Sigmoid colon (tissue), 7 donors: ENCODE measurements at regions of chr2 and their contacts with region 1.

Region 1: DNA sequence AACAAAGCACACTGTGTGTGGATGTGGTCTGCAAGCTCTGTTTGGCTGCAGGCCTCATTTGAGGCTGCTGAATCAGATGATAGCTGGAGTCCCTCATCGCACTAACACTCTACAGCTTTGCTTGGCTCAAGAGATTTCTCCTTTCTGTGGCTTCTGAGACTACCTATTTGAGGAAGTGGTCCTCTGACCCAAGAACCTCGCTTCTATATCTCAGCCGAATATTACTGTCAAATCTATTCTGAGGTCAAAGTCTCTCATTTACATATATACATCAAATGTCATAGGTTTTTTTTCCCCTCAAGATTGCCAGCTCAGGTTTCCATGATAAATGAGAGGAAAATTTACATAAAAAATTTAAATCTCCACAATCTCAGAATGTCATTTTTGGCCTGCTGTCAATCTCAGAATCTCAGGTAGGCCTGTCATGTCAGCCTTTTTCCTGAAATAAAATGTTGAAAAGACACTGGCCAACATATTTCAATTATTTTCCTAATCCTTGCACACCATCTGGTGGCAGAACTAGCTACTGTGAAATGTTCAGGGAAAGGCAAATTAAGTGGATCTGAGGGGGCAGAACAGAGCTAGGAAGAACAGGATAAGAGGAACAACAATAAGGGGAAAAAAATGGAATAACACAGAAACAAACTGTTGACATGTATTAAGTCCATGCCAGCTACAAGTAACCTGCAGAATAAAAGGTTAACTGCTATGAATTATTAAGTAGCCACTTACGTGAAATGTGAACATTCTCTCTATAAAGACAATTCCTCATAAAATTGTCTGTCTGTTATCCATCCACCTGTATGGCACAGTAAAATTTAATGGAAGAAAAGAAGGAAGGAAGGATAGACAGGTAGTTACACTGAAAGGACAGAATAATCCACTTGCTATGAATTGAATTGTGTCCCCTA is 39.3 kb downstream of the AP1S3 start:
- DNase-seq: no peak
- H3K4me3 ChIP-seq: no peak overlapping the region
- H3K27ac ChIP-seq: no peak overlapping the region
- H3K4me1 ChIP-seq: no peaks in the 10 kb centered on the region
- H3K27me3 ChIP-seq: no peaks in the 10 kb centered on the region
- CTCF ChIP-seq: peak; percentile 57 to 71 (median 61)
- EP300 ChIP-seq: no peak
- POLR2A ChIP-seq: no peak

Region 2: DNA sequence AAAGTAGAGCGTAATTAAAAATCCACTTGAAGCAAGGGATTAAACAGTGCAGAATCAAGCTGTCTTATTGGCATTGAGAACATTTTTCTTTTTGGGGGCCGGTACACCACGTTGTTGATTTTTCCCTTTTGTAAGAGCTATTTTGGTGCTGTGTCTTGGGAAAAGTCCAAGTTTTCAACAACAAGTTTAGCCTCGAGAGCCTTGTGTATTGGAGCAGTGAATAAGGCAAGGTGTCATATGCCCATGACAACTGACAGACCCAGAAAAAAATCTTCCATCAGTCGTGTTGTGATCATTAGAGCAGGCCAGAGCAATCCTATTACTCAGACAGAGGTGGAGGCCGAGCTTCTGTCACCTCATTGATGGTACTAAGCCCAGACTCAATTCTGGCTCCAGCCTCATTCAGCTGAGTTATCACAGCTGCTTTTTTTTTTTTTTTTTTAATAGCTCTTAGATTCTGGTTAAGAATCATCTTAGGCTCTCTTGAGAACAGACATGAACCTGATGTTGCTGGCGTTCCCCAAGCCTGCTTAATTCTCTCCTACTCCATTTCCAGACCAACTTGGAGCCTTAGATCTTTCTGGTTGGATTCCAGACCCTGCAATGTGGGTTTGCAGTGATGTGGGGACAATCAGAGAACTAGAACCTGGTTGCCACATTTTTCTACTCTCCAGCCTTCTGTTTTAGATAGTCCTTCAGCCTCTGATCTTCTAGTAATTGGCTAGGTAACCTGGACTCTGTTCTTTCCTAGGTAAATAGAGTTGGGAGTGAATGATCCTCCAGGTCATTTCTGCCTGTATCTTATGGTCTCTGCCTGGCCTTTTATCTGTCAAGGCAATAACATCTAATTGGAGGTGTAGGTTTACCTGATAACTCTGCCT is 1083.5 kb before region 1 on chr2:
- intact Hi-C with region 1: loop called (anchors 10 kb)
- DNase-seq: peak; percentile 77
- H3K4me3 ChIP-seq: no peak overlapping the region
- H3K27ac ChIP-seq: peak overlapping the region; percentile 34 to 64 (median 50)
- H3K4me1 ChIP-seq: peaks cover 0 to 17% (median 14%) of the 10 kb centered on the region in 4 donors
- H3K27me3 ChIP-seq: no peaks in the 10 kb centered on the region
- CTCF ChIP-seq: no peak
- EP300 ChIP-seq: no peak
- POLR2A ChIP-seq: no peak

Region 3: DNA sequence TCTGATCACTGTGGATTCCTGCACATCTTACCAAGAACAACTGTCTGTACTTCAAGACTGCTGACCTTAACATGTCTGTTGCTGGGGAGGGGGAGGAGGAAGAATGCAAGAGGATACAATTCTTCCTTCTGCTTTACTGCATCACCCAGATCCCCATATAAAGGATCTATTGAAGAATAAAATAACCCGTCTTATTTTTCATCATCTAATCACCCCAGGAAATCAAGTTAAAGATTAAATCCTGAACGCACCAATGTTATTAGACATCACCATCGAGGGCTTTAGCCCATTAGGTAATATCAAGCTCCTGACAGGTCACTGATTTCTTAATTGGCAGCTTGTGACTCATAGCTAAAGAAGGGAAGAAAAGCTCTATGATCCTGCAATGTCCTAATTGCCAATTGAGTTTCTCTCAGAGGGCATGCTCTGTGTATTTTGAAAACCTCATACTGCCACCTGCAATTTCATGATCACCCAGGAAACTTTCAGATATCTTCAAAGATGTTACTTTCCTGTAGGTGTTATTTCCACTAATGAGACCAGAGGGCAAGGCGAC is 821.5 kb before region 1 on chr2:
- intact Hi-C with region 1: loop called (anchors 1 kb)
- DNase-seq: no peak
- H3K4me3 ChIP-seq: no peak overlapping the region
- H3K27ac ChIP-seq: no peak overlapping the region
- H3K4me1 ChIP-seq: peaks cover 0 to 5% (median 0%) of the 10 kb centered on the region in 4 donors
- H3K27me3 ChIP-seq: no peaks in the 10 kb centered on the region
- CTCF ChIP-seq: no peak
- EP300 ChIP-seq: no peak
- POLR2A ChIP-seq: no peak